WTC11 (cell line): ENCODE measurements at regions of chr3 and their contacts with region 1.

Region 1: GRCh38 chr3:185572183-185572582 is 13.9 kb upstream of the SENP2 start:
- DNase-seq: no peak
- ATAC-seq: no peak
- H3K4me3 Mint-ChIP-seq: no peak overlapping the region
- H3K27ac Mint-ChIP-seq: no peak overlapping the region
- H3K4me1 Mint-ChIP-seq: peaks cover 7% of the 10 kb centered on the region
- H3K27me3 Mint-ChIP-seq: peaks cover 4% of the 10 kb centered on the region; the same call in 1 of the 2 replicates
- CTCF ChIP-seq: no peak

Region 2: GRCh38 chr3:185460719-185461350 is 111.3 kb before region 1 on chr3:
- CTCF ChIA-PET with region 1: interaction called, 21 read pairs
- POLR2A ChIA-PET with region 1: no interaction called
- DNase-seq: no peak
- ATAC-seq: peak; percentile 30; the same call in 1 of the 2 replicates
- H3K4me3 Mint-ChIP-seq: no peak overlapping the region
- H3K27ac Mint-ChIP-seq: no peak overlapping the region
- H3K4me1 Mint-ChIP-seq: no peaks in the 10 kb centered on the region
- H3K27me3 Mint-ChIP-seq: no peaks in the 10 kb centered on the region
- CTCF ChIP-seq: no peak

Region 3: GRCh38 chr3:185498503-185499396 is 73.4 kb before region 1 on chr3 and contains the start of gene TMEM41A:
- CTCF ChIA-PET with region 1: interaction called, 10 read pairs
- POLR2A ChIA-PET with region 1: no interaction called
- DNase-seq: peak; percentile 97
- ATAC-seq: peak; percentile 97
- H3K4me3 Mint-ChIP-seq: peak within 1 kb of the TSS; percentile 94
- H3K27ac Mint-ChIP-seq: peak within 1 kb of the TSS; percentile 98
- H3K4me1 Mint-ChIP-seq: peaks cover 6% of the 10 kb centered on the region; the same call in 1 of the 2 replicates
- H3K27me3 Mint-ChIP-seq: peaks cover 17% of the 10 kb centered on the region
- CTCF ChIP-seq: no peak
- total RNA-seq, gene TMEM41A: 14.4 to 17.2 TPM (median 15.7 TPM) in 3 replicates

Region 4: GRCh38 chr3:185552358-185552877 is 19.8 kb before region 1 on chr3 and contains the start of gene LIPH:
- CTCF ChIA-PET with region 1: interaction called, 11 read pairs
- POLR2A ChIA-PET with region 1: no interaction called
- DNase-seq: no peak
- ATAC-seq: peak; percentile 76
- H3K4me3 Mint-ChIP-seq: no peak within 1 kb of the TSS
- H3K27ac Mint-ChIP-seq: peak within 1 kb of the TSS; percentile 51
- H3K4me1 Mint-ChIP-seq: peaks cover 7% of the 10 kb centered on the region
- H3K27me3 Mint-ChIP-seq: no peaks in the 10 kb centered on the region
- CTCF ChIP-seq: no peak
- total RNA-seq, gene LIPH: 0.07 to 0.27 TPM (median 0.11 TPM) in 3 replicates

Region 5: DNA sequence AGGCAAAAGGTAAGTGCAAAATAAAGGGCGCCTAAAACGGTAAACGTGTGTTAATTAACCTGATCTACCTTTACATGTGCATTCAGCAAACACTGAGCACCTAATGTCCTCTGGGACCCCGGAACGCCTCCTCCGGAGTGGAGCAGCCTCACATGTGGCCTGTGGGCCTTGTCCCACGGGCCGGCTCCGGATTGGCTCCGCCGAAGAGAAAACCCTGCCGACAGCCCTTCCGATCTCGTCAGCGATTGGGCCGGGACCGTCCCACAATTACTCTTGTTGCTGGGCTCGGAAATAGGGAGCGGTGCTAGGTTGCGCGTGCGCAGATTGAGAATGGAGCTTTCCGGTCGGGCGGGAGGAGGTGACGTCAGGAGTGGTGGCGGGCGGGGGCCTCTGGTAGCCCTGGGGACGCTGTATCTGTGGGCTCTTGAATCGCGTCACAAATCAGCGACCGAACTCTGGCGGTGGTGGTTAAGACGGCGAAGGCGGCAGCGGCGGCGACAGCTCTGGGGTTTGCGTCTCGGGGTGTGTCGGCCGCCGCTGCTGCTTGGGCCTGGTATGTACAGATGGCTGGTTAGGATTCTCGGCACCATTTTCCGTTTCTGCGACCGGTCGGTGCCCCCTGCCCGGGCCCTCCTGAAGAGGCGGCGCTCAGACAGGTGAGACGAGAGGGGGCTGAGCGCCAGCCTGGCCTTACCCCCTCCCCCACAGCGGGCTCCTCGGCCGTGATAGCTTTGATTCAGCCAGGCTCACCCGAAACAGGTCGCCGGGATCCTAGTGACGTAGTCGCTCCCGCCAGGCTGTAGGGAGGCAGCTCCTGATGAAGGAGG is 13.9 kb after region 1 on chr3 and contains the start of gene SENP2:
- CTCF ChIA-PET with region 1: interaction called, 21 read pairs
- POLR2A ChIA-PET with region 1: interaction called, 7 read pairs
- DNase-seq: peak; percentile 99
- ATAC-seq: peak; percentile 87
- H3K4me3 Mint-ChIP-seq: peak within 1 kb of the TSS; percentile 89
- H3K27ac Mint-ChIP-seq: peak within 1 kb of the TSS; percentile 99
- H3K4me1 Mint-ChIP-seq: peaks cover 37% of the 10 kb centered on the region
- H3K27me3 Mint-ChIP-seq: no peaks in the 10 kb centered on the region; the same call in 1 of the 2 replicates
- CTCF ChIP-seq: no peak
- total RNA-seq, gene SENP2: 55.0 to 57.2 TPM (median 56.9 TPM) in 3 replicates